Motor neuron (in vitro differentiated cells): ENCODE measurements at regions of chr20 and their contacts with region 1.

Region 1: GRCh38 chr20:18632196-18633009 is 44.5 kb downstream of the DTD1 start:
- ATAC-seq: peak; percentile 80 to 99 (median 92)
- H3K4me3 ChIP-seq: no peak overlapping the region
- H3K27ac ChIP-seq: no peak overlapping the region
- H3K4me1 ChIP-seq: peaks cover 25 to 45% of the 10 kb centered on the region in 2 donors

Region 2: DNA sequence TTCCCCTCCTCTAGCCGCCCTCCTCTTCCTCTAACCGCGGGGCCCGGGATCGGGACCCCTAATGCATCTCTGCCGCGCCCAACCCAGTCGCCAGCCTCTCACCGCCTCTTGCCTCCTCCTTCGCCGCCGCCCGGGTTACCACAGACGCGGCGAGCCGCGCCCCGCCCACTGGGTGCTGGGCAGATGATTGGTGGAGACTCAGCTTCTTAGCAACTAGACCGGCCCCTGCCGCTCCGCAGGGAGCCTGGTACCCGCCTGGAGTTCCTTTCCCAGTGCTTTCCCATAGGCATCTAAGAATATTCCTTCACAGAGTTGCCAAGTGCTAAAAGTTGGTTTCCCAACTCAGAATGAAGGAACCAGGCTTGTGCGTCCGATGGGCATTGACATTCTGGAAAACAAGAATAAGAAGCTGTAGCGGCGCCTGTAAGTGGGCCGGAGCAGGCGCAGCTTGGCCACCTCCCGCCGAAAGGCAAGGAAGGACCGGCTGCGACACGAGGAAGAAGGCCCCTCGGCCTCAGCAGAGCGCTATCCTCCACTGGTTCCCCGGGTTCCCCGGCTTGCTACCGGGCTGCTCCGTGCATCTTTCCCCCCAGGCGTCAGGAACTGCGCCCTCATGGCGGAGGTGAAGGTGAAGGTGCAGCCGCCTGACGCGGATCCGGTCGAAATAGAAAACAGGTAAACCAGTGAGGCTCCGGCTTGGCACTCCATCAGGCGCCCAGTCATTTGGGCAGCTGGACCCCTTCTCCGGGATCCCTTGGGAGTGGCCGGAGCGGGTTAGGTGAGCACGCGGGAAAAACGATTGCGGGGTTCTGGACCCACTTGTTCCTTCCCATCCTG is 165.3 kb before region 1 on chr20 and contains the starts of genes DZANK1 and POLR3F:
- in situ Hi-C with region 1: no loop called
- ATAC-seq: peak; percentile 98 to 100 (median 99)
- H3K4me3 ChIP-seq: peak within 1 kb of the TSS; percentile 48 to 94 (median 58)
- H3K27ac ChIP-seq: peak within 1 kb of the TSS; percentile 93 to 98
- H3K4me1 ChIP-seq: peaks cover 11 to 16% of the 10 kb centered on the region in 2 donors
- total RNA-seq, gene DZANK1: 1.0 to 7.2 (median 4.4) TPM
- total RNA-seq, gene POLR3F: 12.0 to 21.5 (median 15.6) TPM

Region 3: DNA sequence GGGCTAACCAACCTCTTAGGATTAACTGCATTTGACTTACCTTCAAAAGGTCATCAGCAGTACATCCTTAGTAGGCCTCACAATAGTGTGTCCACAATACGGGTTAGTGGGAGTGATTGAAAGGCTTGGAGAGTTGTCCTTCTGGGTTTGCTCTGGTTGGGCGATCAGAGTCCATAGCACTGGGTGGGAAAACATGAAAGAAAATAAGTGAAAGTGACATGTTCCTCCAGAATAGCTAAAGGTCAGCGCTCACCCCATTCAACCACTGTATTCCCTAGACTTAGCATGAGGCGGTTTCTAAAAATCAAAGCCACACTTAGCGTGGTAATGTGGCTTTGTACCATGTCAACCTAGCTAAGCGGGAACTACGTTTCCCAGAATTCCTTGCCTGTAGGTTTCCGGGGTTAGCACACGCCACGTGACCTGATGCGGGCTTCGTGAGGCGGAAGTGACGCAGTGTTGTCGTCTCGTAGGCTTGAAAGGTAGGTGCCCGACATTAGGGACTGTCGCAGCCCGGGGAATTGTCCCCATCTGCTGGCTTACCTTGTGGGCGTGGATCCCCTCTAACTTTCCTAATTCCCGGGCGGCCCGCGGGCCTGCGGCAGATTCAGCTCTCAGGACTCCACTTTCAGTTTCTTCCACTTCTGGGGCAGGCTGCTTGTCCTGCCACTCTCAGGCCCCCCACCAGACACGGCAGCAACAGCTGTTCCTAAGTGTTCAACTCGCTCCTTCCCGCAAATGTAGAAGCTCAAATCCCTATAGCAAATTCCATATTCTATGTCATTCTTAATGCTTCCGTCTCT is 161.4 kb after region 1 on chr20:
- in situ Hi-C with region 1: loop called in 1 of 9 experiments (anchors 25 kb)
- ATAC-seq: peak; percentile 97 to 99 (median 99)
- H3K4me3 ChIP-seq: peak overlapping the region; percentile 57 to 95 (median 65)
- H3K27ac ChIP-seq: peak overlapping the region; percentile 41 to 80
- H3K4me1 ChIP-seq: peaks cover 15% of the 10 kb centered on the region in 2 donors

Region 4: GRCh38 chr20:19661717-19662636 is 1029.6 kb after region 1 on chr20:
- in situ Hi-C with region 1: loop called in 3 of 9 experiments (anchors 25 kb)
- ATAC-seq: peak; percentile 72 to 90 (median 78)
- H3K4me3 ChIP-seq: no peak overlapping the region
- H3K27ac ChIP-seq: no peak overlapping the region
- H3K4me1 ChIP-seq: peaks cover 8 to 13% of the 10 kb centered on the region in 2 donors